ENCODE measurements at regions of chr19 and their contacts with region 1.

Region 1: DNA sequence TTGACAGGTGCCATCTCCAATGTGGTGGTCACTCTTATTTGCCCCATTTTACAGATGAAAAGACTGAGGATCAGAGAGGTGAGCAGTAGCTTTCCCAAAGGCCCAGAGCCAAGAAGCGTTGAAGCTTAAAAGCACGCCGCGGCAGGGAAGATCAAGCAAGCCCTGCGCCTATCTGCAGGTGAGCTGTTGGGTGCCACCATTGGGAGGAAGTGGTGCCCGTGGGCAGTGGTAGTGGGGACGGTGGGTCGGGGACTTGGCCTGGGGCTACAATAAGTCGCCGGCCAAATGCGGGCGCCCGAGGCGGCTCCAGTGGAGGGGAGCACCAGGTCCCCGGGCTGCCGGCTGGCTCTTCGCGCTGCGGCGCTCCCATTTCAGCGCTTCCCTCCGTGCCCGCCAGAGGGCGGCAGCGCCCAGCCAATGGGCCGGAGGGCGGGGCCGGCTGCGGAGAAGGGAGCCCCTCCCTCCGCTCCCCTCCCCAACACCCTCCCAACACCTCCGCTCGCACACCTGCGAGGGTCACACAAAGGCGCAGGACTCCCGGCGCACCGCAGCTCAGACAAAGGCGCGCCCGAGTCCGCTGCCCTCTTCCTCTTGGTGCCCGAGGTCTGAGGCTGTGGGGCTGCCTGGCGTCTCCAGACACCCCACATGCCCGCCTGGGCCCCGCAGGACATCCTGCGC is 744 bp upstream of the POU2F2 start:
- DNase-seq: peak; percentile 93
- ATAC-seq: peak; percentile 42
- H3K4me3 ChIP-seq: peak overlapping the region; percentile 92 to 100 (median 98)
- H3K4me3 Mint-ChIP-seq: peak overlapping the region; percentile 92
- H3K27ac ChIP-seq: peak overlapping the region; percentile 51 to 71
- H3K27ac Mint-ChIP-seq: peak overlapping the region; percentile 97
- H3K4me1 ChIP-seq: peaks cover 41 to 70% of the 10 kb centered on the region in 2 donors
- H3K4me1 Mint-ChIP-seq: peaks cover 77% of the 10 kb centered on the region
- H3K27me3 ChIP-seq: no peaks in the 10 kb centered on the region
- H3K27me3 Mint-ChIP-seq: no peaks in the 10 kb centered on the region
- CTCF ChIP-seq: peak; percentile 100

Region 2: GRCh38 chr19:42023121-42023942 is 109.7 kb before region 1 on chr19:
- CTCF ChIA-PET with region 1: no interaction called
- POLR2A ChIA-PET with region 1: no interaction called
- intact Hi-C with region 1: no loop called
- DNase-seq: no peak
- ATAC-seq: no peak
- H3K4me3 ChIP-seq: no peak overlapping the region
- H3K4me3 Mint-ChIP-seq: no peak overlapping the region
- H3K27ac ChIP-seq: no peak overlapping the region
- H3K27ac Mint-ChIP-seq: no peak overlapping the region
- H3K4me1 ChIP-seq: no peaks in the 10 kb centered on the region
- H3K4me1 Mint-ChIP-seq: no peaks in the 10 kb centered on the region
- H3K27me3 ChIP-seq: peaks cover 0 to 4% (median 0%) of the 10 kb centered on the region in 4 experiments
- H3K27me3 Mint-ChIP-seq: peaks cover 19% of the 10 kb centered on the region
- CTCF ChIP-seq: peak; percentile 8

Region 3: GRCh38 chr19:42075616-42076379 is 57.2 kb before region 1 on chr19 and contains the start of gene ZNF574:
- CTCF ChIA-PET with region 1: no interaction called
- POLR2A ChIA-PET with region 1: interaction called, 3 read pairs
- intact Hi-C with region 1: loop called (anchors 1 kb)
- DNase-seq: peak; percentile 100
- ATAC-seq: peak; percentile 94
- H3K4me3 ChIP-seq: peak within 1 kb of the TSS; percentile 56 to 93 (median 86)
- H3K4me3 Mint-ChIP-seq: peak within 1 kb of the TSS; percentile 97
- H3K27ac ChIP-seq: peak within 1 kb of the TSS; percentile 95 to 99
- H3K27ac Mint-ChIP-seq: peak within 1 kb of the TSS; percentile 99
- H3K4me1 ChIP-seq: peaks cover 20 to 23% of the 10 kb centered on the region in 2 donors
- H3K4me1 Mint-ChIP-seq: peaks cover 35% of the 10 kb centered on the region
- H3K27me3 ChIP-seq: no peaks in the 10 kb centered on the region
- H3K27me3 Mint-ChIP-seq: peaks cover 5% of the 10 kb centered on the region
- CTCF ChIP-seq: no peak
- total RNA-seq, gene ZNF574: 27.4 and 28.4 TPM in 2 replicates

Region 4: GRCh38 chr19:42113641-42114348 is 19.2 kb before region 1 on chr19:
- CTCF ChIA-PET with region 1: interaction called, 419 read pairs
- POLR2A ChIA-PET with region 1: interaction called, 77 read pairs
- intact Hi-C with region 1: loop called (anchors 1 kb)
- DNase-seq: peak; percentile 84
- ATAC-seq: peak; percentile 80
- H3K4me3 ChIP-seq: peak overlapping the region in 4 of 5 experiments; percentile 16 to 49 (median 38)
- H3K4me3 Mint-ChIP-seq: peak overlapping the region; percentile 87
- H3K27ac ChIP-seq: peak overlapping the region; percentile 71 to 79
- H3K27ac Mint-ChIP-seq: peak overlapping the region; percentile 98
- H3K4me1 ChIP-seq: peaks cover 81 to 98% of the 10 kb centered on the region in 2 donors
- H3K4me1 Mint-ChIP-seq: peaks cover 91% of the 10 kb centered on the region
- H3K27me3 ChIP-seq: no peaks in the 10 kb centered on the region
- H3K27me3 Mint-ChIP-seq: no peaks in the 10 kb centered on the region
- CTCF ChIP-seq: no peak

Region 5: GRCh38 chr19:42176990-42177685 is 44.1 kb after region 1 on chr19:
- CTCF ChIA-PET with region 1: interaction called, 25 read pairs
- POLR2A ChIA-PET with region 1: no interaction called
- intact Hi-C with region 1: no loop called
- DNase-seq: peak; percentile 85
- ATAC-seq: peak; percentile 93
- H3K4me3 ChIP-seq: peak overlapping the region; percentile 3 to 83 (median 48)
- H3K4me3 Mint-ChIP-seq: no peak overlapping the region
- H3K27ac ChIP-seq: no peak overlapping the region
- H3K27ac Mint-ChIP-seq: no peak overlapping the region
- H3K4me1 ChIP-seq: peaks cover 26 to 49% of the 10 kb centered on the region in 2 donors
- H3K4me1 Mint-ChIP-seq: peaks cover 15% of the 10 kb centered on the region
- H3K27me3 ChIP-seq: peaks cover 0 to 49% (median 39%) of the 10 kb centered on the region in 4 experiments
- H3K27me3 Mint-ChIP-seq: peaks cover 20% of the 10 kb centered on the region
- CTCF ChIP-seq: peak; percentile 48

Region 6: DNA sequence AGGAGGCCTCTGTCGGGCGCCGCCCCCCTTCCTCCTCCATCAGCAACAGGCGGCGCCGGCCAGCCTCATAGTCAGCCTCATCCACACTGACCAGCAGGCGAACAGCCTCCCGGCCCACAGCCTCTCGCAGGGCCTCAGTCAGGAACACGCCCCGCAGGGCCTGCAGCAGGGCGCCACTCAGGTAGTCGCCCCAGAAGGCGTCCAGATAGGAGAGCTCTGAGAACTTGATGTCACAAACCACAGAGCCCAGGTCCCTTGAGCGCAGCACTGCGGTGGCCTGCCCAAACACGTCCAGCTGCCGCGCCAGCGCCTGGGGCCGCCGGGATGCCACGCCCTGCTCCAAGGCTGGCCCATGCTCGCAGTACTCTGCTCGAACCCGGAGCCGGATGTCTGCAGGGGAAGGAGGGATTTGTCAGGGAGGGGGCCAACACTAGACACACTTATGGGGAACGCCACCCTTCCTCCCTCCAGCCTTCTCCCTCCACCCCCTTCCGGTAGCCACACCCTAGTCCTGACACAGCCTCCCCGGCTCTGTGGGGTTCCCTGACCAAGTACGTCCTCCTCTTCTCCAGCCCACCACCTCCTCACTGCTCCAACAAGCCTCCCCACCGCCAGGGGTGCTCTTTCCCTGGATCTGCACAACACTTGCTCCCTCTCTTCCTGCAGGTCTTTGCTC is 66.6 kb after region 1 on chr19:
- CTCF ChIA-PET with region 1: interaction called, 11 read pairs
- POLR2A ChIA-PET with region 1: interaction called, 5 read pairs
- intact Hi-C with region 1: loop called (anchors 2 kb)
- DNase-seq: peak; percentile 70
- ATAC-seq: peak; percentile 37
- H3K4me3 ChIP-seq: peak overlapping the region; percentile 27 to 54 (median 44)
- H3K4me3 Mint-ChIP-seq: peak overlapping the region; percentile 77
- H3K27ac ChIP-seq: peak overlapping the region; percentile 91 to 94
- H3K27ac Mint-ChIP-seq: peak overlapping the region; percentile 92
- H3K4me1 ChIP-seq: peaks cover 70 to 84% of the 10 kb centered on the region in 2 donors
- H3K4me1 Mint-ChIP-seq: peaks cover 82% of the 10 kb centered on the region
- H3K27me3 ChIP-seq: no peaks in the 10 kb centered on the region
- H3K27me3 Mint-ChIP-seq: no peaks in the 10 kb centered on the region
- CTCF ChIP-seq: peak; percentile 32

Region 7: DNA sequence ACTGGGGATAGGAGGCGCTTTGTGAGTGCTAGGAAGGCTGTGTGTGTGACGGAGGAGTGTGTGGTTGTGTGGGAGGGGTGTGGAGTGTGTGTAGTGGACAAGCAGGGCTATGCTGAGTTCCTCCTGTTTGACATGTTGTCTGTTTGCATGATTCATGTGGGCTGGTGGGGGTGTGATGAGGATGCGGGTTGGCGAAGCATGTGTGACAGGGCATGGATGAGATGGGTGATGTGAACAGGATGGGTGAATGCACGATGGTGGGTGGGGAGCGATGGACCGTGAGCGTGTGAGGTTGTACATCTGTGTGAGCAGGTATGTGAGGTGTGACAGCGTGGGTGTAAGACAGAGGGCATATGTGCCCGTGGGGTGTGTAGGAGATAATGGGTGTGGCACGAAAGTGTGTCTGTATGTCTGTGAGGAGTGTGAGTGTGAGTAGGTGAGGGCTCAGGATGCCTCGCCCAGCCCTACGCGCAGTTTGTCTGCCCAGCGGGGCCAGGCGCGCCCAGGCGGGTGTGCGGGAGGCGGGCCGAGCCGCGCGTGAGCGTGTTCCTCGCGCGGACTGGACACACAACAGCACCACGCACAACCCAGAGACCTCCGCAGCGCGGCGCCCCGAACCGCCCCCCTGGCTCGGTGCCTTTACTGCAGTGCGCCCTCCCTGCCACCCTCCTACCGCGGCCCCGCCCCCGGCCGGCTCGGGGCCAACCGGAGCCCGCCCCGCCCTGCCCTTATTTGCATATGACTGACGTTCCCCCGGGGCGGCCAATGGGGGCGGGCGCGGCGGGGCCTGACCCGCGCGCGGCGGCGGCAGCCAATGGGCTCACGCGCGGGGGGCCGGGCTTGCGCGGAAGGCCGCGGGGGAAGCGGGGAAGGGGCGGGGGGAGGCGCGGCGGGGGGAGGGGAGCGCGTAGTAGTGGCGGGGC is 150.4 kb after region 1 on chr19:
- CTCF ChIA-PET with region 1: interaction called, 15 read pairs
- POLR2A ChIA-PET with region 1: interaction called, 3 read pairs
- intact Hi-C with region 1: loop called (anchors 1 kb)
- DNase-seq: peak; percentile 98
- ATAC-seq: peak; percentile 64
- H3K4me3 ChIP-seq: peak overlapping the region; percentile 41 to 72 (median 65)
- H3K4me3 Mint-ChIP-seq: no peak overlapping the region
- H3K27ac ChIP-seq: peak overlapping the region; percentile 91 to 96
- H3K27ac Mint-ChIP-seq: no peak overlapping the region
- H3K4me1 ChIP-seq: peaks cover 53 to 65% of the 10 kb centered on the region in 2 donors
- H3K4me1 Mint-ChIP-seq: peaks cover 37% of the 10 kb centered on the region
- H3K27me3 ChIP-seq: no peaks in the 10 kb centered on the region
- H3K27me3 Mint-ChIP-seq: no peaks in the 10 kb centered on the region
- CTCF ChIP-seq: no peak

Region 8: GRCh38 chr19:42423462-42424344 is 290.7 kb after region 1 on chr19:
- CTCF ChIA-PET with region 1: interaction called, 3 read pairs
- POLR2A ChIA-PET with region 1: no interaction called
- intact Hi-C with region 1: loop called (anchors 5 kb)
- DNase-seq: peak; percentile 96
- ATAC-seq: peak; percentile 88
- H3K4me3 ChIP-seq: peak overlapping the region; percentile 75 to 98 (median 85)
- H3K4me3 Mint-ChIP-seq: peak overlapping the region; percentile 98
- H3K27ac ChIP-seq: peak overlapping the region; percentile 78 to 85
- H3K27ac Mint-ChIP-seq: peak overlapping the region; percentile 99
- H3K4me1 ChIP-seq: peaks cover 22 to 40% of the 10 kb centered on the region in 2 donors
- H3K4me1 Mint-ChIP-seq: peaks cover 46% of the 10 kb centered on the region
- H3K27me3 ChIP-seq: peaks cover 0 to 2% (median 0%) of the 10 kb centered on the region in 4 experiments
- H3K27me3 Mint-ChIP-seq: no peaks in the 10 kb centered on the region
- CTCF ChIP-seq: no peak